CD4-positive, alpha-beta memory T cell (primary cell): ENCODE measurements at regions of chr21 and their contacts with region 1.

Region 1: GRCh38 chr21:29449306-29449950 is 150.7 kb downstream of the BACH1 start:
- DNase-seq: peak; percentile 41 to 86 (median 80)
- H3K4me3 ChIP-seq: no peak overlapping the region
- H3K4me3 Mint-ChIP-seq: peak overlapping the region; percentile 22 to 78 (median 64)
- H3K27ac ChIP-seq: peak overlapping the region; percentile 41
- H3K27ac Mint-ChIP-seq: peak overlapping the region; percentile 89 to 95 (median 93)
- H3K4me1 ChIP-seq: peaks cover 24% of the 10 kb centered on the region
- H3K4me1 Mint-ChIP-seq: peaks cover 16 to 40% (median 20%) of the 10 kb centered on the region in 4 donors
- H3K27me3 ChIP-seq: no peaks in the 10 kb centered on the region
- H3K27me3 Mint-ChIP-seq: no peaks in the 10 kb centered on the region

Region 2: GRCh38 chr21:29078869-29079767 is 370.3 kb before region 1 on chr21:
- CTCF ChIA-PET with region 1: no interaction called
- POLR2A ChIA-PET with region 1: interaction called, 16 read pairs
- intact Hi-C with region 1: loop called (anchors 5 kb)
- DNase-seq: peak; percentile 37 to 44 (median 40)
- H3K4me3 ChIP-seq: no peak overlapping the region
- H3K4me3 Mint-ChIP-seq: peak overlapping the region; percentile 37 to 79 (median 70)
- H3K27ac ChIP-seq: peak overlapping the region; percentile 33
- H3K27ac Mint-ChIP-seq: peak overlapping the region; percentile 88 to 95 (median 93)
- H3K4me1 ChIP-seq: peaks cover 53% of the 10 kb centered on the region
- H3K4me1 Mint-ChIP-seq: peaks cover 22 to 71% (median 48%) of the 10 kb centered on the region in 4 donors
- H3K27me3 ChIP-seq: no peaks in the 10 kb centered on the region
- H3K27me3 Mint-ChIP-seq: no peaks in the 10 kb centered on the region

Region 3: DNA sequence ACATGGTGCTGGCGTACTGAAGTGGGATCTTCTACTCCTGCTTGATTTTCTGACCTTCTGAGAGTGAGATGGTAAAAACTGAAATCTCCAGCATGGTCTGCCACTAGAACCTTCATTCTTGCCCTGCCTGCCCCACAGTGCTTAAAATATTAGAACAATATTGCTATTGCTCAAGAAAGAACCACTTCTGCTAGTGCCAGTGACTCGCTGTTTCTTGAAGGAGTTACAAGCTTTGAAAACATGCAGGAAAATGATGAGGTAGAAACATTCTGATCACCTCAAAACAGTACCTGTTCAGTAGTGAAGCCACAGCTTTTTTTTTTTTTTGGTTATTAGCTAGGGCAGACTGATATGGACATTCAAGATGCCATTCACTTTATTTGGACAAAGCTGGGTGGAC is 55.4 kb before region 1 on chr21:
- CTCF ChIA-PET with region 1: no interaction called
- POLR2A ChIA-PET with region 1: no interaction called
- intact Hi-C with region 1: no loop called
- DNase-seq: no peak
- H3K4me3 ChIP-seq: no peak overlapping the region
- H3K4me3 Mint-ChIP-seq: no peak overlapping the region
- H3K27ac ChIP-seq: no peak overlapping the region
- H3K27ac Mint-ChIP-seq: no peak overlapping the region
- H3K4me1 ChIP-seq: no peaks in the 10 kb centered on the region
- H3K4me1 Mint-ChIP-seq: no peaks in the 10 kb centered on the region
- H3K27me3 ChIP-seq: no peaks in the 10 kb centered on the region
- H3K27me3 Mint-ChIP-seq: no peaks in the 10 kb centered on the region

Region 4: GRCh38 chr21:29436143-29436542 is 13.3 kb before region 1 on chr21:
- CTCF ChIA-PET with region 1: no interaction called
- POLR2A ChIA-PET with region 1: interaction called, 15 read pairs
- intact Hi-C with region 1: no loop called
- DNase-seq: peak; percentile 32 to 59 (median 45)
- H3K4me3 ChIP-seq: peak overlapping the region in 1 of 2 donors; percentile 35
- H3K4me3 Mint-ChIP-seq: peak overlapping the region; percentile 76 to 92 (median 89)
- H3K27ac ChIP-seq: no peak overlapping the region
- H3K27ac Mint-ChIP-seq: peak overlapping the region; percentile 15 to 96 (median 92)
- H3K4me1 ChIP-seq: peaks cover 28% of the 10 kb centered on the region
- H3K4me1 Mint-ChIP-seq: peaks cover 25 to 62% (median 25%) of the 10 kb centered on the region in 4 donors
- H3K27me3 ChIP-seq: no peaks in the 10 kb centered on the region
- H3K27me3 Mint-ChIP-seq: no peaks in the 10 kb centered on the region

Region 5: DNA sequence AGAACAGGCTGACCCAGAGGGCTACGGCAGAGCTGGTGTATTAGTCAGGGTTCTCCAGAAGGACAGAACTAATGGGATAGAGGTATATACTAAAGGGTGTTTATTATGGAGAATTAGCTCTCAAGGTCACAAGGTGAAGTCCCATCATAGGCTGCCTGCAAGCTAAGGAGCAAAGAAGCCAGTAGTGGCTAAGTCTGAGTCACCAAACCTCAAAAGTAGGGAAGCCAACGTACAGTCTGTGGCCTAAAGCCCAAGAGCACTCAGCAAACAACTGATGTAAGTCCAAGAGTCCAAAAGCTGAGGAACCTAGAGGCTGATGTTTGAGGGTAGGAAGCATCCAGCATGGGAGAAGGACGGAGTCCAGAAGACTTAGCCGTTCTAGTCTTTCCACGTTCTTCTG is 28.5 kb after region 1 on chr21:
- CTCF ChIA-PET with region 1: interaction called, 64 read pairs
- POLR2A ChIA-PET with region 1: interaction called, 7 read pairs
- intact Hi-C with region 1: loop called (anchors 1 kb)
- DNase-seq: no peak
- H3K4me3 ChIP-seq: no peak overlapping the region
- H3K4me3 Mint-ChIP-seq: no peak overlapping the region
- H3K27ac ChIP-seq: no peak overlapping the region
- H3K27ac Mint-ChIP-seq: no peak overlapping the region
- H3K4me1 ChIP-seq: no peaks in the 10 kb centered on the region
- H3K4me1 Mint-ChIP-seq: peaks cover 0 to 15% (median 3%) of the 10 kb centered on the region in 4 donors
- H3K27me3 ChIP-seq: no peaks in the 10 kb centered on the region
- H3K27me3 Mint-ChIP-seq: no peaks in the 10 kb centered on the region

Region 6: DNA sequence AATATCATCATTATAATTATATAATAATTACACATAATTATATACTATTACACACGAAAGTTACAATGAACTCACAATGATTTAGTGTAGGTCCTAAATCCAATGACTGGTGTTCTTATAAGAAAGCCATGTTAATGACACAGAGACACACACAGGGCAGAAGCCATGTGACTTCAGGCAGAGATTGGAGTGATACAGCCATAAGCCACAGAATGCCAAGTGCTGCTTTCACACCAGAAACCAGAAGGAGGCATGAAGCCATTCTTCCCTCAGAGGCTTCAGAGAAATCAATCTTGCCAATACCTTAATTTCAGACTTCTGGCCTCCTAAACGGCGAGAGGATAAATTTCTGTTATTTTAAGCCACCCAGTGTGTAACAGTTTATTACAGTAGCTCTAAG is 1736.2 kb after region 1 on chr21:
- CTCF ChIA-PET with region 1: no interaction called
- POLR2A ChIA-PET with region 1: no interaction called
- intact Hi-C with region 1: loop called (anchors 5 kb)
- DNase-seq: peak in 3 of 5 donors; percentile 24 to 68 (median 27)
- H3K4me3 ChIP-seq: peak overlapping the region; percentile 70 to 85
- H3K4me3 Mint-ChIP-seq: peak overlapping the region; percentile 85 to 94 (median 90)
- H3K27ac ChIP-seq: peak overlapping the region; percentile 62
- H3K27ac Mint-ChIP-seq: peak overlapping the region; percentile 70 to 94 (median 92)
- H3K4me1 ChIP-seq: peaks cover 88% of the 10 kb centered on the region
- H3K4me1 Mint-ChIP-seq: peaks cover 58 to 84% (median 70%) of the 10 kb centered on the region in 4 donors
- H3K27me3 ChIP-seq: no peaks in the 10 kb centered on the region
- H3K27me3 Mint-ChIP-seq: no peaks in the 10 kb centered on the region